ENCODE measurements at regions of chr9 and their contacts with region 1.

Region 1: DNA sequence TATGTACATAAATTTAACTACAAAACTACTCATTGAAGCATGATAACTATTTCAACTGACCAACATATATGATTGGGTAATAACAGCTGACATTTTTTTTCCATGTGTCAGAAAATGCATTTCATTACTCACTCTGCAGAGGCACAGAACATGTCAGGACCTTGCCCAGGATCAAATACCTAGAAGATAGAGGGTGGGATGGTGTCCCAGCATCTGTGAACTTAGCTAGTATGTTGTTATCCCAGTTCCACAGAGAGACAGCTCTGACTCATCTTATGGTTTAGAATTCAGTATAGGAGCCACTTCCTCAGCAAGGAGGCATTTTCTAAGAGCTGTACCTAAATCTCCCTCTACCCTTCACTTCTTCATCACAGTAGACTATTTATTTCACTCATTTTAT is 1198.6 kb upstream of the ACO1 start:
- DNase-seq: no peak
- ATAC-seq: no peak
- H3K4me3 ChIP-seq: no peak overlapping the region
- H3K27ac ChIP-seq: no peak overlapping the region
- H3K4me1 ChIP-seq: no peaks in the 10 kb centered on the region
- H3K27me3 ChIP-seq: no peaks in the 10 kb centered on the region
- CTCF ChIP-seq: no peak
- EP300 ChIP-seq: no peak
- POLR2A ChIP-seq: no peak
- RAD21 ChIP-seq: no peak

Region 2: DNA sequence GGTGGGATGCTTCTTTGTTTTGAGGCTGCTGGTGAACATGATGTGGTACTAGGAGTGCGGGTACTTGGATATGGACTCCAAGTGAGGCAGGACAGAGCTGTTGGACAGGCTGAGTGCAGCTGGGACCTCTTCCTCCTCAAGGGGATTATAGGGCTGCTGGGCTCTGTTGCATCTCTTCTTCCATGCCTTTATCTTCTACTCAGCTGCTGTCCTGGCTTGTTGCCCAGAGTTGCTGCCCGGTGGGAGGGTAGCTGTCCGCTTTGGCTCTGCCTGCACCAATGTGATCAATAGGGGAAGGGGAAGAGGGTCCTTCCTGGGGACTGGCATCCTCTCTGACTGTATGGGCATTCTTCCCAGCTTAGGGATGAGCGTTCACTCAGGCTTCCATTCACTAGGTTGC is 19.3 kb before region 1 on chr9:
- CTCF ChIA-PET with region 1: no interaction called
- POLR2A ChIA-PET with region 1: no interaction called
- RAD21 ChIA-PET with region 1: no interaction called
- SMC1A ChIA-PET with region 1: no interaction called
- in situ Hi-C with region 1: no loop called
- intact Hi-C with region 1: no loop called
- DNase-seq: no peak
- ATAC-seq: no peak
- H3K4me3 ChIP-seq: no peak overlapping the region
- H3K27ac ChIP-seq: no peak overlapping the region
- H3K4me1 ChIP-seq: no peaks in the 10 kb centered on the region
- H3K27me3 ChIP-seq: no peaks in the 10 kb centered on the region
- CTCF ChIP-seq: no peak
- EP300 ChIP-seq: no peak
- POLR2A ChIP-seq: no peak
- RAD21 ChIP-seq: no peak

Region 3: DNA sequence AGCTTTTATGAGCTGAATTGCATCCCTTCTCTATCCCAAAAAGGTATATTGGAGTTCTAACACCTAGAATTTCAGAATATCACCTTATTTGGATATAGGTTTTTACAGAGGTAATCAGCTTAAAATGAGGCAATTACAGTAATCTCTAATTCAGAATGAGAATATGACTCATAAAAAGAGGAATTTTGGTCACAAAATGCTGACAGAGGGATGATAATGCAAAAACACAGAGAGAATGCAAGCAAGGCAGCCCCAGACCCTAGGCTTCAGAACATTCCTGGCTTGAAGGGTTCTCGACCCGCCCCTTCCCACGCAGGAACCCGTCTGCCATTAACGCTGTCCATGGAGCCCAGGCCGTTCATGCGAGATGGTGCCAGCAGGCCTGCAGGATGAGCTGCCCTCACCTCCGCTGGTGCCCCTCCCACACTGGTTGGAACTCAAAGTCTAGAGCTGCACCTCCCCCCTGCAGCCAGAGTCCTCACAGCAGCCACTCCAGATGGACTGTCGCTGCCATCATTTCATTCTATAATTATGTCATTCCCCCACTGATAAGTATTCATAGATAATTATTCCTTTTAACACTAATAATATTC is 25.2 kb after region 1 on chr9:
- CTCF ChIA-PET with region 1: no interaction called
- POLR2A ChIA-PET with region 1: no interaction called
- RAD21 ChIA-PET with region 1: no interaction called
- SMC1A ChIA-PET with region 1: no interaction called
- in situ Hi-C with region 1: no loop called
- intact Hi-C with region 1: no loop called
- DNase-seq: peak; percentile 1
- ATAC-seq: peak; percentile 90
- H3K4me3 ChIP-seq: no peak overlapping the region
- H3K27ac ChIP-seq: no peak overlapping the region
- H3K4me1 ChIP-seq: no peaks in the 10 kb centered on the region
- H3K27me3 ChIP-seq: no peaks in the 10 kb centered on the region
- CTCF ChIP-seq: no peak
- EP300 ChIP-seq: no peak
- POLR2A ChIP-seq: no peak
- RAD21 ChIP-seq: no peak

Region 4: GRCh38 chr9:31236344-31236743 is 50.5 kb after region 1 on chr9:
- CTCF ChIA-PET with region 1: no interaction called
- POLR2A ChIA-PET with region 1: no interaction called
- RAD21 ChIA-PET with region 1: no interaction called
- SMC1A ChIA-PET with region 1: no interaction called
- in situ Hi-C with region 1: no loop called
- intact Hi-C with region 1: loop called (anchors 5 kb)
- DNase-seq: no peak
- ATAC-seq: no peak
- H3K4me3 ChIP-seq: no peak overlapping the region
- H3K27ac ChIP-seq: no peak overlapping the region
- H3K4me1 ChIP-seq: no peaks in the 10 kb centered on the region
- H3K27me3 ChIP-seq: no peaks in the 10 kb centered on the region
- CTCF ChIP-seq: no peak
- EP300 ChIP-seq: no peak
- POLR2A ChIP-seq: no peak
- RAD21 ChIP-seq: no peak

Region 5: GRCh38 chr9:31275419-31275818 is 89.6 kb after region 1 on chr9:
- CTCF ChIA-PET with region 1: no interaction called
- POLR2A ChIA-PET with region 1: no interaction called
- RAD21 ChIA-PET with region 1: no interaction called
- SMC1A ChIA-PET with region 1: no interaction called
- in situ Hi-C with region 1: no loop called
- intact Hi-C with region 1: no loop called
- DNase-seq: no peak
- ATAC-seq: no peak
- H3K4me3 ChIP-seq: no peak overlapping the region
- H3K27ac ChIP-seq: no peak overlapping the region
- H3K4me1 ChIP-seq: no peaks in the 10 kb centered on the region
- H3K27me3 ChIP-seq: no peaks in the 10 kb centered on the region
- CTCF ChIP-seq: no peak
- EP300 ChIP-seq: no peak
- POLR2A ChIP-seq: no peak
- RAD21 ChIP-seq: no peak

Region 6: GRCh38 chr9:32069169-32069813 is 883.5 kb after region 1 on chr9:
- CTCF ChIA-PET with region 1: no interaction called
- POLR2A ChIA-PET with region 1: no interaction called
- RAD21 ChIA-PET with region 1: no interaction called
- SMC1A ChIA-PET with region 1: no interaction called
- in situ Hi-C with region 1: no loop called
- intact Hi-C with region 1: loop called (anchors 5 kb)
- DNase-seq: no peak
- ATAC-seq: peak; percentile 66
- H3K4me3 ChIP-seq: no peak overlapping the region
- H3K27ac ChIP-seq: no peak overlapping the region
- H3K4me1 ChIP-seq: no peaks in the 10 kb centered on the region
- H3K27me3 ChIP-seq: no peaks in the 10 kb centered on the region
- CTCF ChIP-seq: peak; percentile 25 to 39 (median 30); a peak in 5 of 6 replicates
- EP300 ChIP-seq: no peak
- POLR2A ChIP-seq: no peak
- RAD21 ChIP-seq: no peak